Tibial artery (tissue), 4 donors: ENCODE measurements at regions of chr4 and their contacts with region 1.

Region 1: DNA sequence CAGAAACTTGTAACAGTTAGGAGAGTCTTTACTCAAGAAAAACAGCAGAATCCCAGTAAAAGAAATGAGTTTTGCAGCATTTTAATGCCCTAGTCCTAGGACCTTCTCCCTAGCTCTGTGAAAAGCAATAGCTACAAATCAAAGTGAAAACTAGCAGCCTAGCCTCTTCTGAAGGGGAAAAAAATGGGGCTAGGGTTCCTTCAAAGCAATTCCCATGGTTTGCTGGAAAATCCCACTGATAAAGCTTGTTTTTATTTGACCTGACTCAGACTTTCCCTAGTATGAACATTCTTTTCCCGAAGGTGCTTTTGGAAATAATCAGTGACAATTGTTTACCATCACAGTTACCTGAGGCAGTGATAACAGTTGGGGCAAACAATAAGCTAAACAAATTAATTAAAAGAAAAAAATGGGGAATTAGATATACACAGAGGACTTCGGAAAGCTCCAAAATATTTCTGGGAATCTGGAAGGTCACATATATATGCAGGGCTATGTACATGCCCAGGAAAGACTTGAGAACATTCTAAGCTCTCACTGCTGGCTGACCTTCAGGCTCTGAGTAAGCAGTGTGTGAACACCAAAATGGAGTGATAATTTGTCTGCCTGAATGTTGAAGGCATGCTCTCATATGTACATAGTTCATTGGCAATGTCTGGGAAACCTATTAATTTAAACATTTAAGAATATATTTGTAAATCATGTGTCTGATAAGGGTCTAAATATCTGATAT is 285.9 kb downstream of the KCTD8 start:
- DNase-seq: no peak
- H3K4me3 ChIP-seq: no peak overlapping the region
- H3K27ac ChIP-seq: no peak overlapping the region
- H3K4me1 ChIP-seq: no peaks in the 10 kb centered on the region
- H3K27me3 ChIP-seq: no peaks in the 10 kb centered on the region
- CTCF ChIP-seq: no peak

Region 2: GRCh38 chr4:44132526-44132925 is 30.2 kb before region 1 on chr4:
- intact Hi-C with region 1: loop called (anchors 1 kb)
- DNase-seq: no peak
- H3K4me3 ChIP-seq: no peak overlapping the region
- H3K27ac ChIP-seq: no peak overlapping the region
- H3K4me1 ChIP-seq: no peaks in the 10 kb centered on the region
- H3K27me3 ChIP-seq: no peaks in the 10 kb centered on the region
- CTCF ChIP-seq: no peak